PC-9 (cell line): ENCODE measurements at regions of chr6 and their contacts with region 1.

Region 1: DNA sequence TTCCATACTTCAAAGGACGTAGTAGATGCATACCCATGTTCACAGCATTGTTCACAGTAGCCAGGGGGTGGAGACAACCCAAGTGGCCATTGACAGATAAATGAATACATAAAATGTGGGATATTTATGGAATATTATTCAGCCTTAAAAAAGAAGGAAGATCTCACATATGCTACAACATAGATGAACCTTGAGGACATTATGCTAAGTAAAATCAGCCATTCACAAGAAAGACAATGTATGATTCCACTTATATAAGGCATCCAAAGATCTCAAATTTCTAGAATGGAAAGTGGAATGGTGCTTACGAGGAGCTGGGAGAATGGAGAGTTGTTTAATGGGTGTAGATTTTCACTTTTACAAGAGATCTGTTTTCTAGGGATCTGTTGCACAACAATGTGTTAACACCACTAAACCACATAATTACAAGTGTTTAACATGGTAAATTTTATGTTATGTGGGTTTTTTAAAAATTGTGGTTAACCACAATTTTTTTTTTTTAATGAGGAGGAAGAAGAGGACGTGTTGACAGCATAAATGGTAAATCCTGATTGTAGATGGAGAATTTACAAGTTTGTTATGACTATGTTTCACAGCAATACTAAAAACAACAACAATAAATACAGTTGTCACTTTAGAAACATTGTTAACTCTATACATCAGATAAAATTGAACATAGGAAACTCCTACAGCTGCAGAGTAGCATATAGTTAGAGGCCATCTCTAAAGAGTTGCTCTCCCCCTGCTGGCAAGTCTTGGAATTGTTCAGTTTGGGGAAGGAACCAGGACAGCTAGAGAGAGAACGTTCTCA is 41.6 kb downstream of the CCN2 start:
- DNase-seq: peak; percentile 61 to 65
- H3K4me3 ChIP-seq: no peak overlapping the region
- H3K27ac ChIP-seq: no peak overlapping the region
- H3K4me1 ChIP-seq: no peaks in the 10 kb centered on the region
- H3K27me3 ChIP-seq: 0 out of 2 replicates have a peak, but pooled peaks cover 7% of the 10 kb centered on the region
- CTCF ChIP-seq: peak; percentile 99

Region 2: GRCh38 chr6:131694831-131695426 is 214.7 kb before region 1 on chr6:
- CTCF ChIA-PET with region 1: interaction called, 10 read pairs
- POLR2A ChIA-PET with region 1: no interaction called
- intact Hi-C with region 1: no loop called
- DNase-seq: peak; percentile 44 to 57
- H3K4me3 ChIP-seq: no peak overlapping the region
- H3K27ac ChIP-seq: no peak overlapping the region
- H3K4me1 ChIP-seq: no peaks in the 10 kb centered on the region
- H3K27me3 ChIP-seq: no peaks in the 10 kb centered on the region
- CTCF ChIP-seq: peak; percentile 90

Region 3: DNA sequence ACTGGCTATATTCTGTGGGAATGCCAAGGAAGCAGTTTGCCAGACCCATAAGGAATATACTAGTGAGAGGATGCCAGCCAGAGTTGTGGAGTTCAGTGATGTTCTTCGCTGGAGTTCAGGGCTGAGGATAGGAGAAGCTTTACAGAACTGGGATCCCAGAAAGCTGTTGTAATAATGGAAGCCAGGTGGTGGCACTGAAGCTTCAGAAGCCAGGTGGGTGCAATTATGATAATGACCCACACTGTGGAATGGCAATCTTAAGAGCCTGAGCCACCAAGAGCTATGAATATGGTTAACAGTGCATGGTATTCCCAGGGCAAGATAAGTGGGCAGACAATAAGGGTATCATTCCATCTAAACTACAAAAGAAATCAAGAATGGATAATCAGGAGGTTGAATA is 126.8 kb before region 1 on chr6:
- CTCF ChIA-PET with region 1: no interaction called
- POLR2A ChIA-PET with region 1: interaction called, 3 read pairs
- intact Hi-C with region 1: loop called (anchors 1 kb)
- DNase-seq: no peak
- H3K4me3 ChIP-seq: no peak overlapping the region
- H3K27ac ChIP-seq: no peak overlapping the region
- H3K4me1 ChIP-seq: no peaks in the 10 kb centered on the region
- H3K27me3 ChIP-seq: no peaks in the 10 kb centered on the region
- CTCF ChIP-seq: 0 out of 2 replicates have a peak, but pooled peaks have one; percentile 36

Region 4: GRCh38 chr6:131840936-131841583 is 68.6 kb before region 1 on chr6:
- CTCF ChIA-PET with region 1: no interaction called
- POLR2A ChIA-PET with region 1: no interaction called
- intact Hi-C with region 1: no loop called
- DNase-seq: no peak
- H3K4me3 ChIP-seq: no peak overlapping the region
- H3K27ac ChIP-seq: no peak overlapping the region
- H3K4me1 ChIP-seq: peaks cover 12% of the 10 kb centered on the region
- H3K27me3 ChIP-seq: no peaks in the 10 kb centered on the region
- CTCF ChIP-seq: no peak

Region 5: GRCh38 chr6:132391391-132392271 is 482.0 kb after region 1 on chr6:
- CTCF ChIA-PET with region 1: no interaction called
- POLR2A ChIA-PET with region 1: no interaction called
- intact Hi-C with region 1: loop called (anchors 10 kb)
- DNase-seq: no peak
- H3K4me3 ChIP-seq: no peak overlapping the region
- H3K27ac ChIP-seq: no peak overlapping the region
- H3K4me1 ChIP-seq: no peaks in the 10 kb centered on the region
- H3K27me3 ChIP-seq: no peaks in the 10 kb centered on the region
- CTCF ChIP-seq: no peak